H1 (cell line): ENCODE measurements at regions of chr6 and their contacts with region 1.

Region 1: DNA sequence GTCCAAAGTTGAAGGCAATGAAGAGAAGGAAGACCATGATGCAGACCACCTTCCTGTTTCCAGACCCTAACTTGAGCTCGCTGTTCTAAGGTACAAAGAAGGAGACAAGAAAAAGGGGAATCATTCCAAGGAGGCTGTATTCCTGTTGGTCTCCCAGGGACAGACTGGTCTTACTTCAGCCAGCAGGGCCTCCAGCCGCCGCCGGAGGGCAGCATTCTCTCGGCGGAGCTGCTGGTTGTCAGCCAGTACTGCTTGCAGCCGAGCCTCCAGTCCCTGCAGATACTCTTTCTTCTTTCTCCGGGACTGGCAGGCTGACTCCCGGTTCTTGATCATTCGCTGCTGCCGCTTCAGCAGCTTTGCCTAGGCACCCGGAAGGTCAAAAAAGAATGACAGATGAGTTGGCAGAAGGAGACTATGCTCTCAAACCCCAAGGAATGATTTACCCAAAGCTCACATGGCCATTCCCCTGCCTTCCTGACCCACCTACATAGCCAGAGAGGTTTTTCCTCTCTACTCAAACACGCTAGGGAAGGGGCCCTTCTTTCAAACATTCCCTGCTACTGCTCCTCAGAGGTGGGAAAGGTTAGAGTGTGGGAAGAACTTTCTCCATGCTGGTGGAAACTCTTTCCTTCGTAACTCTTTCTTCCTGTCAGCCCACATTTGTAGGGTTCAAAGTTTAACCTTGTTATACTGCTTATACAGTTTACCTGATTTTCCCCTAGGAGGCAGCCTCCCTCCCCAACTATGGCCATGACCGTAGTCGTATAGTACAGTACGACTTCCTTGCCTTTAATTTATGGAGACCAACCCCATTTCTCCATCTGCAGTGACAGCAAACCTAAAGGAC is 9.0 kb downstream of the ATF6B start:
- DNase-seq: peak; percentile 73 to 88
- H3K4me3 ChIP-seq: no peak overlapping the region
- H3K27ac ChIP-seq: no peak overlapping the region
- H3K4me1 ChIP-seq: peaks cover 0 to 2% (median 0%) of the 10 kb centered on the region in 4 experiments; a peak in 2 of 7 replicates
- H3K27me3 ChIP-seq: no peaks in the 10 kb centered on the region
- CTCF ChIP-seq: peak; percentile 94 to 96 (median 95)
- EP300 ChIP-seq: no peak
- POLR2A ChIP-seq: no peak
- RAD21 ChIP-seq: peak; percentile 92 to 94

Region 2: DNA sequence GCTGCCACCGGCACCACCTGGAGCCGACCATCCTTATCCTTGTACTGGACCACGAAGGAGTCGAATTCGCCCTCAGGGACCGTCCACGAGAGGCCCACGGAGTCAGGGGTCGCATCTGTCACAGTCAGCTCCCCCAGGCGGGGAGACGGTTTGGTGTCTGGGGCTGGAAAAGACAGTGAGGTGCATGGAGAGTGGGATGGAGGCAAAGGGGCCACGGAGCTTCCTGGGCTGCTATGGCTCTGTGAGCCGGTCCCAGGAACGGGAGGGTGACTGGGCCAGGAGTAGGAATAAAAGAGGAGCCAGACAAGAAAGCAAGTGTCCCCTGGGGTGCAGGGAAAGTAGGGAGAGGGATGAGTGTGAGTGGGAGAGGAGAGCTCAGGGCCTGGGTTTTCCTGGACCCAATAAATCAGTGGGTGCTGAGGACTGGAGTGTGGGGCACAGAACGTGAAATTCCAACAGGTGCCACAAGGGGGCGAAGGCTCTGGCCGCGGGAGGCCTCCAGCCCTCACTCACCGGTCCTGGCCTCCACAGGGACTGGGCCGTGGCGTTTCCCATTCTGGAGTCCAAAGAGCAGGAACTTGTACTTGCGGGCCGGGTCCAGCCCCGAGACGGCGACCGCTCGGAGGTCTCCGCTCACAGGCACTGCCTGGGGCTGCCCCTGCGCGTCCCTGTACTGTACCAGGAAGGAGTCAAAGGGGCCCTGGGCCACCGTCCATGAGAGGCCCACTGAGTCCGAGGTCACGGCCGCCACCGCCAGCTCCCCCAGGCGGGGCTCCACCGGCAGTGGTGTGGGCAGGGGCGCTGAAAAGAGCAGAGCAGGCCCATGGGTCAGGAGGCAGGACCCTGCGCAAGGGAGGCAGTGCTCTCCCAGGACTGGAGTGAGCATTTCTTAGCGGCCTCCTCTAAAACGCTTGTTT is 70.9 kb before region 1 on chr6:
- CTCF ChIA-PET with region 1: interaction called, 27 read pairs
- POLR2A ChIA-PET with region 1: no interaction called
- DNase-seq: peak; percentile 31 to 97
- H3K4me3 ChIP-seq: no peak overlapping the region
- H3K27ac ChIP-seq: no peak overlapping the region
- H3K4me1 ChIP-seq: peaks cover 0 to 7% (median 4%) of the 10 kb centered on the region in 4 experiments; a peak in 4 of 7 replicates
- H3K27me3 ChIP-seq: no peaks in the 10 kb centered on the region
- CTCF ChIP-seq: peak; percentile 86 to 93 (median 92)
- EP300 ChIP-seq: no peak
- POLR2A ChIP-seq: no peak
- RAD21 ChIP-seq: peak; percentile 60 to 74

Region 3: GRCh38 chr6:32087574-32088486 is 31.2 kb before region 1 on chr6:
- CTCF ChIA-PET with region 1: interaction called, 61 read pairs
- POLR2A ChIA-PET with region 1: interaction called, 4 read pairs
- DNase-seq: peak; percentile 73 to 92
- H3K4me3 ChIP-seq: peak overlapping the region; percentile 12 to 60 (median 28)
- H3K27ac ChIP-seq: no peak overlapping the region
- H3K4me1 ChIP-seq: peaks cover 0 to 16% (median 7%) of the 10 kb centered on the region in 4 experiments; a peak in 5 of 7 replicates
- H3K27me3 ChIP-seq: peaks cover 0 to 13% (median 11%) of the 10 kb centered on the region in 4 experiments; a peak in 5 of 7 replicates
- CTCF ChIP-seq: peak in 2 of 3 experiments; percentile 68 to 83; a peak in 3 of 4 replicates
- EP300 ChIP-seq: peak in 1 of 2 experiments; percentile 62; a peak in 1 of 3 replicates
- POLR2A ChIP-seq: no peak
- RAD21 ChIP-seq: peak; percentile 73 to 80

Region 4: DNA sequence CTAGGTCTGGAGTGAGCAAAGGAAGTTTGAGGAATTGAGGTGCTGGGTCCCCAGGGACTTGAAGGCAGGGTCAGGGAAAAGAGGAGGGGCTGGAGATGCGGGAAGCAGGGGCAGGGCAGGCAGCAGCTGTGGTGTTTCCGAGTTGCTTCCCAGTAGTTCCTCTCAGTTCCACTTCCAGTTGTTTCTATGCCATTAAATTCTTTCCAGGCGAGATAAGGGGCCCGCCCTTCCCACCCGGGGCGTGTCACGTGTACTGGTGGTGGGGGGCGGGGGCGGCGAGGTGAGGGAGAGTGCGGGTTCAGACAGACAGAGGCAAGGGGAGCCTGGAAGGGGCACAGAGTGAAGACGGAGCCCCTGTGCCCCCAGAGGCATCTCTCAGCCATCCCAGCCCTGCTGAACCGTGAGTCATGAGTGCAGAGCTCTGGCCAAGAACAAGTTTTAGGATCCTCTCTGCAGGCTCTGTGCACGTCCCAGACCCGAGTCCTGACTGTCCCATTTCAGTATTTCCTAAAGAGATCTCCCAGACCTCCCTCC is 10.8 kb before region 1 on chr6:
- CTCF ChIA-PET with region 1: interaction called, 63 read pairs
- POLR2A ChIA-PET with region 1: interaction called, 10 read pairs
- DNase-seq: no peak
- H3K4me3 ChIP-seq: peak overlapping the region in 3 of 4 experiments; percentile 5 to 9 (median 9); a peak in 3 of 8 replicates
- H3K27ac ChIP-seq: no peak overlapping the region
- H3K4me1 ChIP-seq: peaks cover 2 to 13% (median 7%) of the 10 kb centered on the region in 4 experiments
- H3K27me3 ChIP-seq: peaks cover 0 to 11% (median 6%) of the 10 kb centered on the region in 4 experiments; a peak in 5 of 7 replicates
- CTCF ChIP-seq: no peak
- EP300 ChIP-seq: no peak
- POLR2A ChIP-seq: no peak
- RAD21 ChIP-seq: no peak

Region 5: DNA sequence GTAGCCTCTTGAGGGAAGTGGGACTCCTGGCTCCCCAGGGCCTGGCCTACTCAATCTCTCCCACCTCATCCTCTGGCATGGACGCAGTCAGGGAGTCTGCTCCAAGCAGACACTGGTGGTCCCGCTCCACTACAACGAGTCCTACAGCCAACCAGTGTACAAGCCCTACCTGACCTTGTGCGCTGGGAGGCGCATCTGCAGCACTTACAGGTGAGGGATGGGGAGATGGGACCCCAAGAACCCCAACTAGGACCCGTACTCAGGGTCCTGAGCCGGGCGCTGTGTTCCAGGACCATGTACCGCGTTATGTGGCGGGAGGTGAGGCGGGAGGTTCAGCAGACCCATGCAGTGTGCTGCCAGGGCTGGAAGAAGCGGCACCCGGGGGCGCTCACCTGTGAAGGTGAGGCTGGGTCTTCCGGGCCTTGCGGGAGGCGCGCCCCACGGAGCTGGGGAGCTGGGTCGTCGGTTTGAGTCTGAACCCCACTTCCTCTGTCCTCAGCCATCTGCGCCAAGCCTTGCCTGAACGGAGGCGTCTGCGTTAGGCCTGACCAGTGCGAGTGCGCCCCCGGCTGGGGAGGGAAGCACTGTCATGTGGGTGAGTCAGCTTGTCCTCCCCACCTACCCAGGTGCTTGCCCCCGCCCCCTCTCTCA is 47.5 kb after region 1 on chr6:
- CTCF ChIA-PET with region 1: interaction called, 72 read pairs
- POLR2A ChIA-PET with region 1: interaction called, 8 read pairs
- DNase-seq: peak; percentile 61 to 92
- H3K4me3 ChIP-seq: no peak overlapping the region
- H3K27ac ChIP-seq: peak overlapping the region; percentile 33; the same call in 1 of the 2 replicates
- H3K4me1 ChIP-seq: peaks cover 0 to 5% (median 2%) of the 10 kb centered on the region in 4 experiments; a peak in 3 of 7 replicates
- H3K27me3 ChIP-seq: no peaks in the 10 kb centered on the region
- CTCF ChIP-seq: peak in 2 of 3 experiments; percentile 67 to 71; a peak in 3 of 4 replicates
- EP300 ChIP-seq: no peak
- POLR2A ChIP-seq: no peak
- RAD21 ChIP-seq: peak; percentile 71 to 74

Region 6: GRCh38 chr6:32190054-32190851 is 71.2 kb after region 1 on chr6 and contains the start of gene PBX2:
- CTCF ChIA-PET with region 1: interaction called, 13 read pairs
- POLR2A ChIA-PET with region 1: interaction called, 5 read pairs
- DNase-seq: peak; percentile 65 to 70
- H3K4me3 ChIP-seq: peak within 1 kb of the TSS; percentile 30 to 87 (median 64)
- H3K27ac ChIP-seq: peak within 1 kb of the TSS; percentile 76
- H3K4me1 ChIP-seq: peaks cover 8 to 36% (median 18%) of the 10 kb centered on the region in 4 experiments
- H3K27me3 ChIP-seq: no peaks in the 10 kb centered on the region
- CTCF ChIP-seq: no peak
- EP300 ChIP-seq: no peak
- POLR2A ChIP-seq: no peak; a peak in 1 of 3 replicates
- RAD21 ChIP-seq: no peak
- total RNA-seq, gene PBX2: 130 and 133 TPM in 2 replicates